Activated CD8-positive, alpha-beta T cell treated with anti-CD3 and anti-CD28 coated beads, Interleukin-2, amount 10 ng/mL, durations not matched to agents 7 days and 5 days (primary cell): ENCODE measurements at regions of chr12 and their contacts with region 1.

Region 1: GRCh38 chr12:10562306-10562933 is 51.0 kb downstream of the MAGOHB start:
- DNase-seq: peak; percentile 61
- ATAC-seq: no peak
- H3K4me3 Mint-ChIP-seq: peak overlapping the region; percentile 15
- H3K27ac Mint-ChIP-seq: no peak overlapping the region
- H3K4me1 Mint-ChIP-seq: peaks cover 78% of the 10 kb centered on the region
- H3K27me3 Mint-ChIP-seq: no peaks in the 10 kb centered on the region

Region 2: GRCh38 chr12:10235761-10236631 is 326.4 kb before region 1 on chr12:
- CTCF ChIA-PET with region 1: interaction called, 23 read pairs
- POLR2A ChIA-PET with region 1: no interaction called
- DNase-seq: peak; percentile 53
- ATAC-seq: peak; percentile 58
- H3K4me3 Mint-ChIP-seq: no peak overlapping the region
- H3K27ac Mint-ChIP-seq: peak overlapping the region; percentile 40
- H3K4me1 Mint-ChIP-seq: peaks cover 32% of the 10 kb centered on the region
- H3K27me3 Mint-ChIP-seq: no peaks in the 10 kb centered on the region

Region 3: GRCh38 chr12:10331642-10332239 is 230.7 kb before region 1 on chr12:
- CTCF ChIA-PET with region 1: interaction called, 10 read pairs
- POLR2A ChIA-PET with region 1: no interaction called
- DNase-seq: no peak
- ATAC-seq: peak; percentile 69
- H3K4me3 Mint-ChIP-seq: no peak overlapping the region
- H3K27ac Mint-ChIP-seq: no peak overlapping the region
- H3K4me1 Mint-ChIP-seq: peaks cover 14% of the 10 kb centered on the region
- H3K27me3 Mint-ChIP-seq: no peaks in the 10 kb centered on the region

Region 4: DNA sequence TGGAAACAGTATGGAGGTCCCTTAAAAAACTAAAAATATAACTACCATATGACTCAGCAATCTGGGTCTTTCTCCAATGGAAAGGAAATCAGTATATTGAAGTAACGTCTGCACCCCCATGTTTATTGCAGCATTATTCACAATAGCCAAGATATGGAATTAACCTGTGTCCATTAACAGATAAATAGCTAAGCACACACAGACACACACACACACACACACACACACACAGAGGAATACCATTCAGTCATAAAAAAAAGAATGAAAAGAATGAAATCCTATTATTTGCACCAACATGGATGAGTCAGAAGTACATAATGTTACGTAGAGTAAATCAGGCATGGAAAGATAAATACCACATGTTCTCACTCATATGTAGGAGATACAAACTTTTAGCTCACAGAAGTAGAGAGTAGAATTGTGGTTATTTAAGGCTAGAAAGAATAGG is 177.2 kb before region 1 on chr12:
- CTCF ChIA-PET with region 1: interaction called, 5 read pairs
- POLR2A ChIA-PET with region 1: interaction called, 91 read pairs
- DNase-seq: no peak
- ATAC-seq: peak; percentile 35
- H3K4me3 Mint-ChIP-seq: peak overlapping the region; percentile 70
- H3K27ac Mint-ChIP-seq: peak overlapping the region; percentile 83
- H3K4me1 Mint-ChIP-seq: peaks cover 57% of the 10 kb centered on the region
- H3K27me3 Mint-ChIP-seq: no peaks in the 10 kb centered on the region

Region 5: GRCh38 chr12:10395390-10395998 is 166.9 kb before region 1 on chr12:
- CTCF ChIA-PET with region 1: interaction called, 3 read pairs
- POLR2A ChIA-PET with region 1: interaction called, 13 read pairs
- DNase-seq: no peak
- ATAC-seq: peak; percentile 71
- H3K4me3 Mint-ChIP-seq: peak overlapping the region; percentile 57
- H3K27ac Mint-ChIP-seq: peak overlapping the region; percentile 81
- H3K4me1 Mint-ChIP-seq: peaks cover 67% of the 10 kb centered on the region
- H3K27me3 Mint-ChIP-seq: no peaks in the 10 kb centered on the region

Region 6: DNA sequence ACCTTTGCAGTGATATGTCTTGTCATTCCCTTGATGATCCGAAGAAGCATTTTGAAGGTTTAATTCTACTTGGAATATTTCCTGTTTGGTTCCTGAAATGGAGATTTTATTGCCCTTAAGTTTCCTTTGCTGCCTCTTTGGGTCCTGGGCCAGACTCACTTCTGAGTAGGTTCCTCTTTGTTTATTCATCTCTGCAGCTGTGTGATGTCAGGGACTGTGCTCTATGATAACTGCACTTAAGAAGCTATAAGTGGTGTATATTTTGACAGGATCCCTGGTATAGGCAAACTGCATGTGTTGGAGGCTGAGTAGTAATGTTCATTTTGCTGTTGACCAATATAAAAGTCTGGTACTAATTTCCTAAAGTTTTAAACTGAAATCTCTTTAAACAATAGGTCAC is 153.0 kb before region 1 on chr12 and contains the start of gene KLRC4:
- CTCF ChIA-PET with region 1: interaction called, 3 read pairs
- POLR2A ChIA-PET with region 1: interaction called, 10 read pairs
- DNase-seq: peak; percentile 49
- ATAC-seq: peak; percentile 63
- H3K4me3 Mint-ChIP-seq: peak within 1 kb of the TSS; percentile 77
- H3K27ac Mint-ChIP-seq: peak within 1 kb of the TSS; percentile 86
- H3K4me1 Mint-ChIP-seq: peaks cover 27% of the 10 kb centered on the region
- H3K27me3 Mint-ChIP-seq: no peaks in the 10 kb centered on the region
- total RNA-seq, gene KLRC4: 3.6 to 4.9 TPM

Region 7: DNA sequence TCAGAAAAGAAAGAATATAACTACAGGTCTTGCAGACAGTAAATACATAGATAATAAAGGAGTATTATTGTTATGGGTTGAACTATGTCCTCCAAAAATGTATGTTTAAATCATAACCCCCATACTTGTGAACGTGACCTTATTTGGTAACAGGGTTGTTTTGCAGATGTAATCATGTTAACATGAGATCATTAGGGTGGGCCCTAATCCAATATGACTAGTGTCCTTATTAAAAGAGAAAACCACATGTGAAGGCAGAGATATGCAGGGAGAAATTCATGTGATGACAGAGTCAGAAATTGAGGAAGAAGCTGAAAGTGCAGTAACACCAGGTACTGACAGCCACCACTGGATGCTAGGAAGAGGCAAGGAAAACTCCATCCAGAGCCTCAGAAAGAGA is 22.0 kb after region 1 on chr12:
- CTCF ChIA-PET with region 1: no interaction called
- POLR2A ChIA-PET with region 1: no interaction called
- DNase-seq: no peak
- ATAC-seq: no peak
- H3K4me3 Mint-ChIP-seq: no peak overlapping the region
- H3K27ac Mint-ChIP-seq: no peak overlapping the region
- H3K4me1 Mint-ChIP-seq: peaks cover 3% of the 10 kb centered on the region
- H3K27me3 Mint-ChIP-seq: no peaks in the 10 kb centered on the region